Aorta (tissue), 5 donors: ENCODE measurements at regions of chr3 and their contacts with region 1.

Region 1: GRCh38 chr3:62188681-62189383 is 184.5 kb downstream of the FEZF2 start:
- DNase-seq: peak; percentile 74 to 91
- ATAC-seq: peak; percentile 84
- H3K4me3 ChIP-seq: no peak overlapping the region
- H3K27ac ChIP-seq: no peak overlapping the region
- H3K4me1 ChIP-seq: no peaks in the 10 kb centered on the region
- H3K27me3 ChIP-seq: no peaks in the 10 kb centered on the region

Region 2: GRCh38 chr3:61847784-61848462 is 340.9 kb before region 1 on chr3:
- intact Hi-C with region 1: loop called in 1 of 2 experiments (anchors 5 kb)
- DNase-seq: peak in 1 of 2 donors; percentile 63
- ATAC-seq: peak; percentile 86
- H3K4me3 ChIP-seq: no peak overlapping the region
- H3K27ac ChIP-seq: peak overlapping the region; percentile 52 to 77
- H3K4me1 ChIP-seq: peaks cover 1 to 7% of the 10 kb centered on the region in 2 donors
- H3K27me3 ChIP-seq: no peaks in the 10 kb centered on the region

Region 3: GRCh38 chr3:61858056-61858455 is 330.8 kb before region 1 on chr3:
- intact Hi-C with region 1: loop called in 1 of 2 experiments (anchors 2 kb)
- DNase-seq: no peak
- ATAC-seq: no peak
- H3K4me3 ChIP-seq: no peak overlapping the region
- H3K27ac ChIP-seq: no peak overlapping the region
- H3K4me1 ChIP-seq: peaks cover 8 to 10% of the 10 kb centered on the region in 2 donors
- H3K27me3 ChIP-seq: no peaks in the 10 kb centered on the region

Region 4: GRCh38 chr3:62870321-62870720 is 681.5 kb after region 1 on chr3:
- intact Hi-C with region 1: no loop called
- DNase-seq: no peak
- ATAC-seq: no peak
- H3K4me3 ChIP-seq: no peak overlapping the region
- H3K27ac ChIP-seq: no peak overlapping the region
- H3K4me1 ChIP-seq: no peaks in the 10 kb centered on the region
- H3K27me3 ChIP-seq: peaks cover 0 to 4% of the 10 kb centered on the region in 2 donors